HEK293 (cell line): ENCODE measurements at regions of chr1 and their contacts with region 1.

Region 1: GRCh38 chr1:61077676-61078541 is 4.5 kb upstream of the NFIA start:
- H3K4me3 ChIP-seq: peak overlapping the region; percentile 56
- H3K27ac ChIP-seq: peak overlapping the region; percentile 86
- H3K4me1 ChIP-seq: peaks cover 21% of the 10 kb centered on the region
- CTCF ChIP-seq: no peak

Region 2: GRCh38 chr1:61049850-61050540 is 27.9 kb before region 1 on chr1:
- CTCF ChIA-PET with region 1: interaction called, 25 read pairs
- POLR2A ChIA-PET with region 1: interaction called, 31 read pairs
- H3K4me3 ChIP-seq: peak overlapping the region; percentile 74
- H3K27ac ChIP-seq: peak overlapping the region; percentile 95
- H3K4me1 ChIP-seq: no peaks in the 10 kb centered on the region
- CTCF ChIP-seq: peak; percentile 96

Region 3: GRCh38 chr1:61056573-61057439 is 21.1 kb before region 1 on chr1:
- CTCF ChIA-PET with region 1: interaction called, 3 read pairs
- POLR2A ChIA-PET with region 1: interaction called, 31 read pairs
- H3K4me3 ChIP-seq: peak overlapping the region; percentile 76
- H3K27ac ChIP-seq: peak overlapping the region; percentile 78; the same call in 1 of the 2 replicates
- H3K4me1 ChIP-seq: peaks cover 15% of the 10 kb centered on the region
- CTCF ChIP-seq: no peak

Region 4: GRCh38 chr1:61184040-61184713 is 106.3 kb after region 1 on chr1:
- CTCF ChIA-PET with region 1: no interaction called
- POLR2A ChIA-PET with region 1: interaction called, 12 read pairs
- H3K4me3 ChIP-seq: no peak overlapping the region
- H3K27ac ChIP-seq: peak overlapping the region; percentile 58
- H3K4me1 ChIP-seq: peaks cover 29% of the 10 kb centered on the region
- CTCF ChIP-seq: peak; percentile 12; the same call in 1 of the 2 replicates